ENCODE measurements at regions of chr4 and their contacts with region 1.

Region 1: DNA sequence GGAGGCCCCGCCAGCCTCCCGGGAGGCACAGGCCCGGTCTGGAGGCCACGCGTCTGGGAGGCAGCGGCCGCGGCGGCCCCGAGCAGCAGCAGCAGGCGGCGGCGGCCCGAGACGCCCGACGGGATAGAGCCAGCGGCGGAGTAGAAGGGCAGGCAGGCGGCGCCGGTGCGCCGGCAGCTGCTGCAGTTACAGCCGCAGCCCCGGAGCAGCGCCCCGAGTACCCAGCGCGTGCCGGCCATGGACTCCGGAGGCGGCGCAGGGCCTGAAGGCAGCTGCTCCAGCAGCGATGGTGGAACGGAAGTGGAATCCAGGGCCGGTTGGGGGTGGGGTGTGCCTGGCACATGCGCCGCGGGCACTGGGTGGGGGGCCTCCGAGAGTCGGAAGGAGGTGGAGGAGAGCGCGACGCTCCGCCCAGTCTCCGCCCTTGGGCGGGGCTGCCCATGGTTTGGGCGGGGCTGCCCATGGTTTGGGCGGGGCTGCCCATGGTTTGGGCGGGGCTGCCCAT is at the start of gene GRSF1:
- DNase-seq: peak; percentile 91 to 94 (median 93)
- ATAC-seq: peak; percentile 90
- H3K4me3 ChIP-seq: peak within 1 kb of the TSS; percentile 89
- H3K27ac ChIP-seq: peak within 1 kb of the TSS; percentile 95
- H3K4me1 ChIP-seq: peaks cover 15 to 18% of the 10 kb centered on the region in 2 experiments
- H3K27me3 ChIP-seq: no peaks in the 10 kb centered on the region
- CTCF ChIP-seq: peak in 2 of 3 experiments; percentile 32 to 57; a peak in 4 of 6 replicates
- EP300 ChIP-seq: no peak
- POLR2A ChIP-seq: peak; percentile 85
- RAD21 ChIP-seq: peak; percentile 32 to 49
- polyA plus RNA-seq, gene GRSF1: 33.0 to 36.8 TPM

Region 2: DNA sequence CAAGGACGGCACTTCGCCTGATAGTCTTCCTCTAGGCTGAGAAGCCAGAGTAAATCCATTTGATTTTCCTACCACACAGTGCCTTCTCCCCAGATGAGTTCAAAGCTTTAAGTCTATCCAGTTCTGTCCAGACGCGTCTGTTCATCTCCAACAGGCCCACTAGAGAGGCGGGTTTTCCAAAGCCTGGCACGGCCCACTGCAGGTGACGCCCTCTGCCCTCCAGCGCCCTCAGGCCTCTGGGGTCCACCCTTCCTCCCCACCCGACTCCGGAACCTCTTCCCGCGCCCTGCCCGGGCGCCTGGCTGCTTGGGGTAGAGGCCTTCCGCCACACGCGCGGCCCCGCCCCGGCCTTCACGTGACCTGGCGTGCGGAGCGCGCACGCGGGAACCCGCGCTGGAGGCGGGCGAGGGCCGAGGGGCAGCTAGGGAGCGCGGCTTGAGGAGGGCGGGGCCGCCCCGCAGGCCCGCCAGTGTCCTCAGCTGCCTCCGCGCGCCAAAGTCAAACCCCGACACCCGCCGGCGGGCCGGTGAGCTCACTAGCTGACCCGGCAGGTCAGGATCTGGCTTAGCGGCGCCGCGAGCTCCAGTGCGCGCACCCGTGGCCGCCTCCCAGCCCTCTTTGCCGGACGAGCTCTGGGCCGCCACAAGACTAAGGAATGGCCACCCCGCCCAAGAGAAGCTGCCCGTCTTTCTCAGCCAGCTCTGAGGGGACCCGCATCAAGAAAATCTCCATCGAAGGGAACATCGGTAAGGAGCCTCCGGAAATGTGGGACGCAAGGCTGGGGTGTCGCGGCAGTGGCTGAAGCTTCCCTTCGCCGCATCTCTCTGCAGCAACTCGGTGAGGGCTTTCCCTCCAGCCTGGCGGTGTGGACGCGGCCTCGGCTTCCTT is 153.8 kb after region 1 on chr4 and contains the start of gene DCK:
- CTCF ChIA-PET with region 1: no interaction called
- POLR2A ChIA-PET with region 1: no interaction called
- in situ Hi-C with region 1: no loop called
- intact Hi-C with region 1: loop called (anchors 5 kb)
- DNase-seq: peak; percentile 92 to 96 (median 93)
- ATAC-seq: peak; percentile 91
- H3K4me3 ChIP-seq: peak within 1 kb of the TSS; percentile 82
- H3K27ac ChIP-seq: peak within 1 kb of the TSS; percentile 85
- H3K4me1 ChIP-seq: peaks cover 15 to 19% of the 10 kb centered on the region in 2 experiments; a peak in 4 of 5 replicates
- H3K27me3 ChIP-seq: no peaks in the 10 kb centered on the region
- CTCF ChIP-seq: peak in 1 of 3 experiments; percentile 2; a peak in 1 of 6 replicates
- EP300 ChIP-seq: no peak
- POLR2A ChIP-seq: peak; percentile 87
- RAD21 ChIP-seq: no peak
- polyA plus RNA-seq, gene DCK: 19.6 to 21.2 TPM

Region 3: DNA sequence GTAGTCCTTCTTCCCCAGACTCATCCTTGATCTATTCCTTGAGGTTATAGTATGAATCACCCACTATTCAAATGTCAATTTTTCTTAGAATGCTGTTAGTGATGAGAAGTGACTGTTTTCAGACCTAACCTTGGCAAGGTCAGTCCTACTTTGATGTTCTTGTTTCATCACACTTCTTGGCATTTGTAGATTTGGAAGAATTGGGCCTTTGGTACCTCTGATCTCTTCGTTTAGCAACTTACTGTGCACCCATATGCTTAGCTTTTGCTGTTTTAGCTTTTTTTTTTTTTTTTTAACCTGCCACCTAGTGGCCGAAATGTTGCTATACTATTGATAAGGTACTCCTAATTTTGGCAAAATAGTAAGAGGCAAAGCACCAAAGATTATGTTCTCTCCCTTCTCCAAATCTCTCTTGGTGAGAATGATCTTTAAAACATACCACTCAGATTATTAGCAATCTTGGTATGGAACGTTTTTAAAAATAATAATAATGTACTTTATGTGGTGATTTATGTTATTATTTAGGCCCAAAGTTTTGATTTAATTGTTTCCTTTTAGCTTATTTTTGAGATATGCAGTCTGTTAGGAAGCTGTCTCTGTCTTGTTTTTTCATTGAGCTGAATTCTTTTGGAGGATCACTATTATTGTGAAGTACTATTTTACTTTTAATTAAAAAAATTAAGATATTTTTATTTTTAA is 170.4 kb after region 1 on chr4:
- CTCF ChIA-PET with region 1: no interaction called
- POLR2A ChIA-PET with region 1: interaction called, 3 read pairs
- in situ Hi-C with region 1: no loop called
- intact Hi-C with region 1: loop called (anchors 5 kb)
- DNase-seq: peak; percentile 46 to 62 (median 52)
- ATAC-seq: peak; percentile 91
- H3K4me3 ChIP-seq: no peak overlapping the region
- H3K27ac ChIP-seq: no peak overlapping the region
- H3K4me1 ChIP-seq: peaks cover 0 to 4% of the 10 kb centered on the region in 2 experiments; a peak in 1 of 5 replicates
- H3K27me3 ChIP-seq: no peaks in the 10 kb centered on the region
- CTCF ChIP-seq: peak; percentile 37 to 71 (median 66); a peak in 5 of 6 replicates
- EP300 ChIP-seq: no peak
- POLR2A ChIP-seq: no peak
- RAD21 ChIP-seq: peak; percentile 30 to 45